A673 (cell line): ENCODE measurements at regions of chr12 and their contacts with region 1.

Region 1: DNA sequence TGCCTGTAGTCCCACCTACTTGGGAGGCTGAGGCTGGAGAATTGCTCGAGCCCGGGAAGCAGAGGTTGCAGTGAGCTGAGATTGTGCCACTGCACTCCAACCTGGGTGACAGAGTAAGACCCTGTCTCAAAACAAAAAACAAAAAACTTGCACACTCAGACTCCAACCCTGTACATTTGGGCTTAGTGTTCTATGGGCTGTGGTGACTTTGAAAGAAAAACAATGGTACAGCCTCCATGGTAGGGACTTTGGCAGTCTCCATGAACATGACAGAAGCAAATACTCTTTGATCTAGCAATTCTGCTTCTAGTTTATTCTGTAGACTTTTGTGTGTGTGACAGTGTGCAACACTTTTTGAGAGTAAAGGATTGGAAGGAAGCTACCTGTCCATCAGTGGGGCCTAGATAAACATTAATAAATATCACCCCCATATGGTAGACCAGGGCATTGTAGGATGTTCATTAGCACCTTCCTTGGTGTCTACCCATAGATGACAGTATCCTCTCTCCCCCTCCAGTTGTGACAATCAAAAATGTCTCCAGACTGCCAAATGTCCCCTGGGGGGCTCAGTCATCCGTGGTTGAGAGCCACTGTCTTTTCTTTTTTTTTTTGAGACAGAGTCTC is 10.7 kb downstream of the SNRNP35 start:
- DNase-seq: peak; percentile 16
- H3K4me3 ChIP-seq: no peak overlapping the region
- H3K27ac ChIP-seq: no peak overlapping the region
- H3K4me1 ChIP-seq: no peaks in the 10 kb centered on the region
- H3K27me3 ChIP-seq: no peaks in the 10 kb centered on the region
- CTCF ChIP-seq: 0 out of 2 replicates have a peak, but pooled peaks have one; percentile 14

Region 2: DNA sequence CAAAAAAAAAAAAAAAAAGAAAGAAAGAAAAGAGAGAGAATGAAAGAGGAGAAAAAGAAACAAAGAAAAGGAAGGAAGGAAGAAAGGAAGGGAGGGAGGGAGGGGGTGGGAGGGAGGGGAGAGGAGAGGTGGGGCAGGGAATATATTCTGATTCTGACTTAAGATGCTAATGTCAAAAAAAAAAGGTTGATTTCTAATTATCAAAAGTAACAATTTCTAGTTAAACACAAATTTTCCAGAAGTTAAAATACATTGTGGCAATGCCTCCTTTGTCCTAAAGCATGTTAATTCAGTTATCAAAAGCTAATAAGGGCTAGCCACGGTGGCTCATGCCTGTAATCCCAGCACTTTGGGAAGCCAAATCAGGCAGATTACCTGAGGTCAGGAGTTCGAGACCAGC is 243.2 kb before region 1 on chr12:
- CTCF ChIA-PET with region 1: no interaction called
- POLR2A ChIA-PET with region 1: interaction called, 11 read pairs
- intact Hi-C with region 1: no loop called
- DNase-seq: no peak
- H3K4me3 ChIP-seq: no peak overlapping the region
- H3K27ac ChIP-seq: no peak overlapping the region
- H3K4me1 ChIP-seq: peaks cover 21% of the 10 kb centered on the region
- H3K27me3 ChIP-seq: no peaks in the 10 kb centered on the region
- CTCF ChIP-seq: no peak

Region 3: DNA sequence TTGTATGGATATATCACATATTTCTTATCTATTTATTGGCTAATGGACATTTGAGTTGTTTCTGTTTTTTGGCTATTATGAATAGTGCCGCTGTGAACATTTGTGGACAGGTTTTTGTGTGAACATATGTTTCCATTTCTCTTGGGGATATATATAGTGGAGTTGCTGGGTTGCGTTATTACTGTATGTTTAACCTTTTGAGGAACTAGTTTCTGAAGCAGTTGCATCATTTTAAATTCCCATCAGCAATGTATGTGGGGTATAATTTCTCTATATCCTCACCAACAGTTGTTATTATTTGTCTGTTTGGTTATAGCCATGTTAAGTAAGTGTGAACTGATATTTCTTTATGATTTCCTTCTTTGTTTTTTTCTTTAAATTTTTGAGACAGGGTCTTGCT is 212.9 kb after region 1 on chr12:
- CTCF ChIA-PET with region 1: no interaction called
- POLR2A ChIA-PET with region 1: no interaction called
- intact Hi-C with region 1: no loop called
- DNase-seq: no peak
- H3K4me3 ChIP-seq: no peak overlapping the region
- H3K27ac ChIP-seq: no peak overlapping the region
- H3K4me1 ChIP-seq: no peaks in the 10 kb centered on the region
- H3K27me3 ChIP-seq: no peaks in the 10 kb centered on the region
- CTCF ChIP-seq: no peak